ENCODE measurements at regions of chr2 and their contacts with region 1.

Region 1: GRCh38 chr2:45343251-45344017 is 267.6 kb downstream of the SRBD1 start:
- DNase-seq: no peak
- H3K4me3 ChIP-seq: no peak overlapping the region
- H3K27ac ChIP-seq: no peak overlapping the region
- H3K4me1 ChIP-seq: no peaks in the 10 kb centered on the region
- H3K27me3 ChIP-seq: peaks cover 0 to 1% of the 10 kb centered on the region in 2 experiments
- CTCF ChIP-seq: no peak
- POLR2A ChIP-seq: no peak

Region 2: GRCh38 chr2:45283764-45284620 is 59.4 kb before region 1 on chr2:
- CTCF ChIA-PET with region 1: no interaction called
- POLR2A ChIA-PET with region 1: no interaction called
- dilution Hi-C with region 1: no loop called
- intact Hi-C with region 1: no loop called
- DNase-seq: no peak
- H3K4me3 ChIP-seq: no peak overlapping the region
- H3K27ac ChIP-seq: no peak overlapping the region
- H3K4me1 ChIP-seq: peaks cover 15% of the 10 kb centered on the region
- H3K27me3 ChIP-seq: no peaks in the 10 kb centered on the region
- CTCF ChIP-seq: no peak
- POLR2A ChIP-seq: no peak

Region 3: GRCh38 chr2:45329045-45329677 is 14.3 kb before region 1 on chr2:
- CTCF ChIA-PET with region 1: interaction called, 18 read pairs
- POLR2A ChIA-PET with region 1: no interaction called
- dilution Hi-C with region 1: no loop called
- intact Hi-C with region 1: no loop called
- DNase-seq: no peak
- H3K4me3 ChIP-seq: no peak overlapping the region
- H3K27ac ChIP-seq: no peak overlapping the region
- H3K4me1 ChIP-seq: peaks cover 10% of the 10 kb centered on the region
- H3K27me3 ChIP-seq: no peaks in the 10 kb centered on the region
- CTCF ChIP-seq: no peak
- POLR2A ChIP-seq: no peak

Measured in endothelial cell of umbilical vein (primary cell).